Heart left ventricle (tissue), 16 donors: ENCODE measurements at regions of chr10 and their contacts with region 1.

Region 1: DNA sequence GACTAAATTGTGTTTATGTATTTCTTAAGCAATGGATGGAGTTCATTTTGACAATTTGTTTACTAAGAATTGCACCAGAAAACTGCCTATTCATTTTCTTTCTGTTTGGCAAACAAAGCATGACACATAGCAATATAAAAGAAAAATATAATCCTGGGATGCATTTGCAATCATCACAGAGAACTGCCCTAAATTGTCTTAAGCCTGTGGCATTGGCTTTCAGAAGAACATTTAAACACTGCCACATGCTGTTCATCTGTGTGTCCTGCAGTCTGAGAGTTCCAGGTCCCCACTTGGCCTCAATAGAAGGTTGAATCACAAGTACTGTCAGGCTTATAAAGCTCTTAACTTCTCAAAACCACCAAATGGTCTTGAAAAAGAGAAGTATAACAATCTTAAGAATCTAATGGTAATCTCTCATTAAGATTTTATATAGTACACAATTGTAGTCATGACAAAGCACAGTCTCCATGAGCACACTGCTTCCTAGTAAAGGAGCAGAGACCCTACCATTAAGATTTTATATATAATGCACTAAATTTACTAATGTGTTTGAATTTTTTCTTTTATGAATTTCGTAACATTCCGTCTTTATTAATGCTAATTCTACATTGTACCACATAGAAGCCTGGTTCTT is 29.9 kb downstream of the RNLS start:
- DNase-seq: peak in 4 of 5 donors; percentile 29 to 47 (median 40)
- ATAC-seq: peak; percentile 88 to 96 (median 90)
- H3K4me3 ChIP-seq: no peak overlapping the region
- H3K27ac ChIP-seq: no peak overlapping the region
- H3K4me1 ChIP-seq: peaks cover 0 to 2% (median 0%) of the 10 kb centered on the region in 12 donors
- H3K27me3 ChIP-seq: no peaks in the 10 kb centered on the region
- CTCF ChIP-seq: peak; percentile 58 to 85 (median 70)
- POLR2A ChIP-seq: no peak

Region 2: GRCh38 chr10:87659571-87660483 is 893.4 kb before region 1 on chr10 and contains the start of gene PAPSS2:
- intact Hi-C with region 1: loop called in 1 of 10 experiments (anchors 5 kb)
- DNase-seq: peak; percentile 70 to 86 (median 77)
- ATAC-seq: peak; percentile 75 to 92 (median 86)
- H3K4me3 ChIP-seq: peak within 1 kb of the TSS; percentile 53 to 92 (median 84)
- H3K27ac ChIP-seq: peak within 1 kb of the TSS; percentile 50 to 85 (median 74)
- H3K4me1 ChIP-seq: peaks cover 0 to 34% (median 5%) of the 10 kb centered on the region in 12 donors
- H3K27me3 ChIP-seq: no peaks in the 10 kb centered on the region
- CTCF ChIP-seq: peak in 4 of 12 donors; percentile 6 to 18 (median 11)
- POLR2A ChIP-seq: peak in 1 of 2 donors; percentile 56
- total RNA-seq, gene PAPSS2: 3.1 to 32.6 (median 9.0) TPM

Region 3: GRCh38 chr10:88243836-88244730 is 309.2 kb before region 1 on chr10:
- intact Hi-C with region 1: loop called in 1 of 10 experiments (anchors 10 kb)
- DNase-seq: peak; percentile 84 to 90 (median 88)
- ATAC-seq: peak; percentile 89 to 97 (median 92)
- H3K4me3 ChIP-seq: peak overlapping the region in 9 of 12 donors; percentile 9 to 39 (median 28)
- H3K27ac ChIP-seq: peak overlapping the region; percentile 76 to 90 (median 84)
- H3K4me1 ChIP-seq: peaks cover 6 to 57% (median 40%) of the 10 kb centered on the region in 12 donors
- H3K27me3 ChIP-seq: no peaks in the 10 kb centered on the region
- CTCF ChIP-seq: no peak
- POLR2A ChIP-seq: no peak

Region 4: DNA sequence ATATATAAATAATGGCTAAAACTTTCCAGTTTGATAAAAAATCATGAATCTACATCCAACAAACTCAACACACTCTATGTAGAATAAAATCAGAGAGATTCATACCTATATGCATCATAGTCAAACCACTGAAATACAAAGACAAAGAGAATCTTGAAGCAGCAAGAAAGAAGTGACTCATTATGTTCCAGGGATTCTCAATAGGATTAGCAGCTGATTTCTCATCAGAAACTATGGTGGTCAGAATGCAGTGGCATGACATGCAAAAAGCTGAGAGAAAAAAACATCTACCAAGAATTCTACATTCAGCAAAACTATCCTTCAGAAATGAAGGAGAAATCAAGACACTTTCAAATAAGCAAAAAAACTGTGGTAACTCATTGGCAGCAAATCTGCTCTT is 157.6 kb before region 1 on chr10:
- intact Hi-C with region 1: loop called in 7 of 10 experiments (anchors 5 to 10 kb)
- DNase-seq: no peak
- ATAC-seq: no peak
- H3K4me3 ChIP-seq: no peak overlapping the region
- H3K27ac ChIP-seq: no peak overlapping the region
- H3K4me1 ChIP-seq: peaks cover 0 to 8% (median 0%) of the 10 kb centered on the region in 12 donors
- H3K27me3 ChIP-seq: no peaks in the 10 kb centered on the region
- CTCF ChIP-seq: no peak
- POLR2A ChIP-seq: no peak

Region 5: DNA sequence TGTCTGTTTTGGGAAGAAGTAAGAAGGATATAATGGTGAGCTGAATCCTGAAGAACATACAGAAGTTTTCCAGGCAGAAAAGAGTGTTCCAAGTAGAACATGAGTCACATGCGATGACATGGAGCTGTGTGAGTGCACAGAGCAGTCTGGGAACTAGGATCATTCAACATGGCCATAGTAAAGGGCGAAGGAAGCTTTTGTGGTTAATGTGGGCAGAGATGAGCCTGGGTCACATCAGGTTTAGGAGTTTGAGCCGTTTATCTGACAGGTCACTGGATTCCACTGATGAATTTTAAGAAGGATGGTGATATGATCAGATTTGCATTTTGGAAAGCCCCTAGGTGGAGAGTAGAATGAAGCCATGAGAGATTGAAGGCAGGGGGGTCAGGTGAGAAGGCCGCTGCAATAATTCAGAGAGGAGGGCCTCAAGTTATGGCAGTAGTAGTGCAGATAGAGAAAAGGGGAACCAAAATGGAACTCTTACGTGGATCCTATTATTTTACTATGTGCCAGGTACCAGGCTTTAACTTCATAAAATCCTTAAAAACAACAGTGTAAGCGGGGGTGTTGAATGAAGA is 141.4 kb before region 1 on chr10:
- intact Hi-C with region 1: loop called in 2 of 10 experiments (anchors 5 to 10 kb)
- DNase-seq: no peak
- ATAC-seq: no peak
- H3K4me3 ChIP-seq: no peak overlapping the region
- H3K27ac ChIP-seq: no peak overlapping the region
- H3K4me1 ChIP-seq: peaks cover 0 to 6% (median 0%) of the 10 kb centered on the region in 12 donors
- H3K27me3 ChIP-seq: no peaks in the 10 kb centered on the region
- CTCF ChIP-seq: no peak
- POLR2A ChIP-seq: no peak